CD8-positive, alpha-beta T cell (primary cell): ENCODE measurements at regions of chr4 and their contacts with region 1.

Region 1: DNA sequence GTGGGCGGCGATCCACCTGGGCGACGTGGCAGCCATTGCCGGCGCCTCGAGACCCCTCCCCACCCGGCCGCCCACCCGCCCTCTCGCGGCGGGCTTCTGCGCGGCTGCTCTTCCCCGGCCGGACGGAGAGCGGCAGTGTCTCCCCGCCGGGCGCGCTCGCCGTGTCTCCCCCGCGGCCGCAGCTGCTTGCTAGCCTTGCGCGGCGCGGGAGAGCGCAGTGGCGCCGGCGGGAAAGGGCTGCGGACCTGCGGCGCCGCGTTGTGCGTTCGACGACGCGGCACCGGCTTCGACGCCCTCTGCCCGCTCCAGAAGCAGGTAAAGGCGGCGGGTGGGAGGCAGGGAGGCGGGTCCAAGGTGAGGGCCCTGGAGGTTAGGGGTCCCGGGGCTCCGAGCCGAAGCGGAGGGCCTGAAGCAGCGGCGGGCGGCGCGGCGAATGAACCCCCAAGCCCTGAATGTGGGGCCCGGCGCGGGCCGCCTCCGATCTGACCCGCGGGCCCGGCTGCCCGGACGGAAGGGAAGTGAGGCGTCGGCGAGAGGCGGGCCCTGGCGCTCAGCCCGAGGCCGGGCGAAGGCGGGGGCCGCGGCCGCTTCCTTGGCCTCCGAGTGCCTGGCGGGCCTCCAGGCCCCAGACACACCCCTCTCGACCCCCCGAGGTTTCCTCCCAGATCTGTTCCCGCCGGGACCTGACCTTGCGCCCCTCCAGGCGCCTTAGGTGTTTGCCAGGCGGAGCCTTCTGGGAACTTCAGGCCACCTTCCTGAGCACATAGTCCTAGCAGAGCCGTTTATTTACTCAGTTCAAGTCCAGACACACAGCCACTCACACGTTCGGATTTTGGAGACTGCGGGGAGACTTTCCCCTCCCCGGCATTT is at the start of gene N4BP2:
- DNase-seq: peak; percentile 46 to 89 (median 71)
- ATAC-seq: peak; percentile 65
- H3K4me3 ChIP-seq: peak within 1 kb of the TSS; percentile 76 to 92
- H3K4me3 Mint-ChIP-seq: peak within 1 kb of the TSS; percentile 94
- H3K27ac ChIP-seq: peak within 1 kb of the TSS; percentile 70 to 87
- H3K27ac Mint-ChIP-seq: peak within 1 kb of the TSS; percentile 94
- H3K4me1 ChIP-seq: peaks cover 21% of the 10 kb centered on the region
- H3K4me1 Mint-ChIP-seq: peaks cover 36% of the 10 kb centered on the region
- H3K27me3 ChIP-seq: no peaks in the 10 kb centered on the region
- H3K27me3 Mint-ChIP-seq: no peaks in the 10 kb centered on the region
- CTCF ChIP-seq: peak; percentile 79
- total RNA-seq, gene N4BP2: 19.5 to 20.4 TPM

Region 2: DNA sequence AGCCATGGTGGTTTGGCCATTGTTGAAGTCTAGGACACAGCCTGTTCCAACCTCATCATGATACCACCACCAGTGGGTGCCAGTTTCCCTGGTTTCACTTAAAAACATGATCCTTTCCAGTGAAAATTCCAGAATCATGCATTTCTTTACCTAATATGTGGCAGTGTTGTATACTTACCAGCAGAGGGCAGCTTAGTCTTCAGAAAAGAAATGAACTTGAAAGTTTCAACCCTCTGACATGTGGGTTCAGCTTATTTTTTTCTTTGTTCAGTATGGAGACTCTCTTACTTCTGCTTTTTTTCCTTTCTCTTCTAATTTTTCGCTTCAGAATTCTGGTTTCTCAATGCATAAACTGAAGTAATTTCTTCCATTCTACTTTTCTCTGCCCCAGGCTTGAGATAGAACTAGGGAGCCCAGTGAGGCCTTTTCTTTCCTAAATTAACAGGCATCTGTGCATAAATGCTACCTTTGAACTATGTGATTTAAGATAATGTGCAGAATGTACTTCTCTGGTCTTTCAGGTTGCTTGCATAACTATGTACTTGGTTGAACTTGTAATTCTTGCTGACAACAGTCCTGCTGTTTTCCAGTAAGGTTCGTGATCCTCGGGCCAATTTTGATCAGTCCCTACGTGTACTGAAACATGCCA is 587.4 kb before region 1 on chr4:
- CTCF ChIA-PET with region 1: no interaction called
- POLR2A ChIA-PET with region 1: no interaction called
- intact Hi-C with region 1: loop called in 1 of 2 experiments (anchors 5 kb)
- DNase-seq: peak in 2 of 9 experiments; percentile 55 to 72
- ATAC-seq: peak; percentile 93
- H3K4me3 ChIP-seq: no peak overlapping the region
- H3K4me3 Mint-ChIP-seq: no peak overlapping the region
- H3K27ac ChIP-seq: no peak overlapping the region
- H3K27ac Mint-ChIP-seq: no peak overlapping the region
- H3K4me1 ChIP-seq: no peaks in the 10 kb centered on the region
- H3K4me1 Mint-ChIP-seq: peaks cover 4% of the 10 kb centered on the region
- H3K27me3 ChIP-seq: no peaks in the 10 kb centered on the region
- H3K27me3 Mint-ChIP-seq: no peaks in the 10 kb centered on the region
- CTCF ChIP-seq: peak; percentile 82

Region 3: DNA sequence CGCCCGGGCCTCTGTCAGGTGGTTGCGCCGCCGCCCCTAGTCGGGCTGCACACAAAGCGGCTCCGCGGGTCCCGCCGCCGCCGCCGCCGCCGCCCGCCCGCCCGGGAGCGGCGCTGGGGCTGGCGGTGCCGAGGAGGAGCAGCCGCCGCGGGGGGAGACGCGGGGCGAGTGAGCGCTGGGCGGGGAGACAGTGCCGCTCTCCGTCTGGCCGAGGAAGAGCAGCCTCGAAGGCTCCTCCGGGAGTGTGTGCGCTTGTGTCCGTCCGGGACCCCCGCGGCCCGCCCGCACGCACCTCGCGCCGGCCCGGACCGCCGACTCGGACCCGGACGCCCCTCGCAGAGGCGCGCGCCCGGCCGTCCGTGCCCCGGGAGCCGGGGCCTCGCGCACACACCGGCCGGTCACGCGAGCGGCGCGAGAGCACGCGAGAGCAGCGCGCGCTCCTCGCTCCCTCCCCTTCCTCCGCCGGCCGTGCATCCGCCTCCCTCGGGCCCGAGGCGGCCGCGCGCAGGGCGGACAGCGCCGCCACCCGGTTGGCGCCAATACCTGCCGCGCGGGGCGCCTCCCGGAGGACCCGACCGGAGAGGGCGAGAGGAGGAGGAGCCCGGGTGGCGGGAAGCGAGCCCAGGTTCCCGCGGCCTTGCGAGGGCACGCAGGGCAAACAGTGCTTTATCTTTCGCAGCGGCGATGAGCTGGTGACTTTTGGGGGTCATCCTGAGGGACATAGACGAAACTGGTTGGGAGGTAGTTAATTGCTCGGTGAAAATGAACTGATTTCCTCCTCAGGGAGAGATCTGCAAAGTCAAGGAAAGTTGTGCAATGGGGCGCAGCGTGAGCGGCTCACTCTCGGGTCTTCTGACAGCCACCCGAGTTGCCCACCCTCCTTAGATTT is 79.2 kb before region 1 on chr4 and contains the start of gene PDS5A:
- CTCF ChIA-PET with region 1: interaction called, 6 read pairs
- POLR2A ChIA-PET with region 1: interaction called, 5 read pairs
- intact Hi-C with region 1: loop called (anchors 1 to 2 kb)
- DNase-seq: peak; percentile 76 to 96 (median 87)
- ATAC-seq: peak; percentile 83
- H3K4me3 ChIP-seq: peak within 1 kb of the TSS; percentile 76 to 77
- H3K4me3 Mint-ChIP-seq: peak within 1 kb of the TSS; percentile 90
- H3K27ac ChIP-seq: peak within 1 kb of the TSS; percentile 80 to 81
- H3K27ac Mint-ChIP-seq: peak within 1 kb of the TSS; percentile 95
- H3K4me1 ChIP-seq: peaks cover 31% of the 10 kb centered on the region
- H3K4me1 Mint-ChIP-seq: peaks cover 30% of the 10 kb centered on the region
- H3K27me3 ChIP-seq: no peaks in the 10 kb centered on the region
- H3K27me3 Mint-ChIP-seq: no peaks in the 10 kb centered on the region
- CTCF ChIP-seq: peak; percentile 79
- total RNA-seq, gene PDS5A: 75.5 to 84.0 TPM

Region 4: DNA sequence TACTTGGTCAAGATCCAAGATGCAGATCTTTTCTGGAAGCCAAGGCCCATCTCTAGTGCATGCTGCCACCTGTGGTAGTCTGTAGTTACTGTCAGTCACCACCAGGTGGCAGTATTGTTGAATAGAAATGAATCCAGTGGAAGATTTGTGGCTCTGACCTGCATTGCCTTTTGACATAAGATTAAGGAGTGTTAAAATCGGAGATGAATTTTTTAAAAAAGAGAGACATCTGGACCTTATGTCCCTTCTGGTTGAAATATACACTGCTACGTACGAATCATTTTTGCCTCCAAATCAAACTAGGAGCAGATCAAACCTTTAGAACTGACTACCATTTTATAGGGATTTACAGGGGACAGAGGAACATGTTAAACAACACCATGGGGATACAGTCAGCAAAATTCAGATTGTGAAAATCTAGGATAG is 93.0 kb after region 1 on chr4:
- CTCF ChIA-PET with region 1: no interaction called
- POLR2A ChIA-PET with region 1: interaction called, 3 read pairs
- intact Hi-C with region 1: loop called in 1 of 2 experiments (anchors 2 kb)
- DNase-seq: peak; percentile 46 to 88 (median 75)
- ATAC-seq: peak; percentile 94
- H3K4me3 ChIP-seq: no peak overlapping the region
- H3K4me3 Mint-ChIP-seq: no peak overlapping the region
- H3K27ac ChIP-seq: no peak overlapping the region
- H3K27ac Mint-ChIP-seq: peak overlapping the region; percentile 81
- H3K4me1 ChIP-seq: peaks cover 36% of the 10 kb centered on the region
- H3K4me1 Mint-ChIP-seq: peaks cover 35% of the 10 kb centered on the region
- H3K27me3 ChIP-seq: no peaks in the 10 kb centered on the region
- H3K27me3 Mint-ChIP-seq: no peaks in the 10 kb centered on the region
- CTCF ChIP-seq: peak; percentile 88

Region 5: GRCh38 chr4:40228497-40229365 is 171.8 kb after region 1 on chr4:
- CTCF ChIA-PET with region 1: no interaction called
- POLR2A ChIA-PET with region 1: interaction called, 3 read pairs
- intact Hi-C with region 1: loop called in 1 of 2 experiments (anchors 5 kb)
- DNase-seq: peak in 3 of 9 experiments; percentile 35 to 65 (median 43)
- ATAC-seq: no peak
- H3K4me3 ChIP-seq: peak overlapping the region; percentile 3 to 25
- H3K4me3 Mint-ChIP-seq: peak overlapping the region; percentile 82
- H3K27ac ChIP-seq: peak overlapping the region; percentile 29 to 96
- H3K27ac Mint-ChIP-seq: peak overlapping the region; percentile 95
- H3K4me1 ChIP-seq: peaks cover 95% of the 10 kb centered on the region
- H3K4me1 Mint-ChIP-seq: peaks cover 94% of the 10 kb centered on the region
- H3K27me3 ChIP-seq: no peaks in the 10 kb centered on the region
- H3K27me3 Mint-ChIP-seq: no peaks in the 10 kb centered on the region
- CTCF ChIP-seq: peak; percentile 42

Region 6: DNA sequence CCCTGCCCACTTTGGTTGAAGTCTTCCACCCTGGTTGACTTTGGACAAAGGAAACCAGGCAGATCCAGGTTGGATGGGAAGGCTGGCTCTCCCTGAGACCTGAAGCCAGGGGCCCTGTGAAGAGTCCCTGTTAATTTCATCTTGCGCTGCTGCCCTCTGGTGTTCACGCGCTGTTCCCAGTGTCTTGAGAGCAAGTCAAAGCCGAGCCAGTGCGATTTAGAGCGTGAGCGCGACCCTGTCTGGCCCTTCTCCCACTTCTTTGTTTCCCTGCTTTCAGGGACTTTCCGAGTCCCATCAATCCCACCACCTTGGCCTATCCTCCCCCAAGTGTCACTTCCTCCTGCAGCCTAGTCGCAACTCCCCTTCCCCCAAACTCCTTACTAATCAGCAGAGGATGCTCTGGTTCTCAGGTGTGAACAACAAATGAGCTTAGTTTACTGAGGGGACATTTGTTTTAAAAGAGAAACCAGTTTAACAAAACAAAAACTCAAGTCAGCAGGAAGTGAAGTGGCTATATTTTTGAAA is 252.4 kb after region 1 on chr4:
- CTCF ChIA-PET with region 1: interaction called, 8 read pairs
- POLR2A ChIA-PET with region 1: interaction called, 6 read pairs
- intact Hi-C with region 1: loop called in 1 of 2 experiments (anchors 1 kb)
- DNase-seq: peak; percentile 84 to 97 (median 92)
- ATAC-seq: peak; percentile 55
- H3K4me3 ChIP-seq: peak overlapping the region; percentile 28 to 38
- H3K4me3 Mint-ChIP-seq: peak overlapping the region; percentile 74
- H3K27ac ChIP-seq: peak overlapping the region; percentile 71 to 96
- H3K27ac Mint-ChIP-seq: peak overlapping the region; percentile 99
- H3K4me1 ChIP-seq: peaks cover 78% of the 10 kb centered on the region
- H3K4me1 Mint-ChIP-seq: peaks cover 82% of the 10 kb centered on the region
- H3K27me3 ChIP-seq: no peaks in the 10 kb centered on the region
- H3K27me3 Mint-ChIP-seq: no peaks in the 10 kb centered on the region
- CTCF ChIP-seq: peak; percentile 86

Region 7: DNA sequence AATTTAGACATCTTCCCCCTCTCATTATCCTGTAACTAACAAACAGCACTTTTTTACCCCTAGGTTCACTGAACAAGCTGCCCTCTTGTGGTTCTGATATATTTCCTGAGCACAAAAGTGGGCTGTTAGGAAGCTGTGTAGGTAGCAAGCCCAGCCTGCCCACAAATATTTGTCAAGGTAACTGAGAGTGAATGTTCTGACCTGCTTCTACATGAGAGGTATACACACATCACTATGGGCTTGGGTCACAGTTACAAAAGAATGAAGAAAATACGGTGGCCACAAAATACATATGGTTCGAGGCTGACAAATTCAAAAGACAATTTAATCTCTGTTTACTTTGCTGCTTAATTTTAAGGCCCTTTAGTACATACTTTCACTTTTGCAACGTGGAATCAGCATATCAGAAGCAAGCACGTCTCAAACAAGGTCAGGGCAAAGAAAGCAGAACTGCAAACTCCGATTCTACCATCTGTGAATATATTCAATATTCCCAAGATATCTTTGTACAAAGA is 494.1 kb after region 1 on chr4:
- CTCF ChIA-PET with region 1: interaction called, 4 read pairs
- POLR2A ChIA-PET with region 1: no interaction called
- intact Hi-C with region 1: loop called in 1 of 2 experiments (anchors 2 kb)
- DNase-seq: peak in 7 of 9 experiments; percentile 10 to 67 (median 24)
- ATAC-seq: peak; percentile 76
- H3K4me3 ChIP-seq: peak overlapping the region; percentile 25 to 33
- H3K4me3 Mint-ChIP-seq: peak overlapping the region; percentile 75
- H3K27ac ChIP-seq: peak overlapping the region; percentile 41 to 63
- H3K27ac Mint-ChIP-seq: peak overlapping the region; percentile 88
- H3K4me1 ChIP-seq: peaks cover 4% of the 10 kb centered on the region
- H3K4me1 Mint-ChIP-seq: peaks cover 12% of the 10 kb centered on the region
- H3K27me3 ChIP-seq: no peaks in the 10 kb centered on the region
- H3K27me3 Mint-ChIP-seq: no peaks in the 10 kb centered on the region
- CTCF ChIP-seq: no peak